ENCODE measurements at regions of chr7 and their contacts with region 1.

Region 1: GRCh38 chr7:106542550-106543220 is 118.3 kb downstream of the CCDC71L start:
- DNase-seq: peak in 1 of 2 donors; percentile 20
- ATAC-seq: peak; percentile 57 to 74 (median 59)
- H3K4me3 ChIP-seq: no peak overlapping the region
- H3K27ac ChIP-seq: no peak overlapping the region
- H3K4me1 ChIP-seq: no peaks in the 10 kb centered on the region
- H3K27me3 ChIP-seq: no peaks in the 10 kb centered on the region
- CTCF ChIP-seq: peak; percentile 55

Region 2: DNA sequence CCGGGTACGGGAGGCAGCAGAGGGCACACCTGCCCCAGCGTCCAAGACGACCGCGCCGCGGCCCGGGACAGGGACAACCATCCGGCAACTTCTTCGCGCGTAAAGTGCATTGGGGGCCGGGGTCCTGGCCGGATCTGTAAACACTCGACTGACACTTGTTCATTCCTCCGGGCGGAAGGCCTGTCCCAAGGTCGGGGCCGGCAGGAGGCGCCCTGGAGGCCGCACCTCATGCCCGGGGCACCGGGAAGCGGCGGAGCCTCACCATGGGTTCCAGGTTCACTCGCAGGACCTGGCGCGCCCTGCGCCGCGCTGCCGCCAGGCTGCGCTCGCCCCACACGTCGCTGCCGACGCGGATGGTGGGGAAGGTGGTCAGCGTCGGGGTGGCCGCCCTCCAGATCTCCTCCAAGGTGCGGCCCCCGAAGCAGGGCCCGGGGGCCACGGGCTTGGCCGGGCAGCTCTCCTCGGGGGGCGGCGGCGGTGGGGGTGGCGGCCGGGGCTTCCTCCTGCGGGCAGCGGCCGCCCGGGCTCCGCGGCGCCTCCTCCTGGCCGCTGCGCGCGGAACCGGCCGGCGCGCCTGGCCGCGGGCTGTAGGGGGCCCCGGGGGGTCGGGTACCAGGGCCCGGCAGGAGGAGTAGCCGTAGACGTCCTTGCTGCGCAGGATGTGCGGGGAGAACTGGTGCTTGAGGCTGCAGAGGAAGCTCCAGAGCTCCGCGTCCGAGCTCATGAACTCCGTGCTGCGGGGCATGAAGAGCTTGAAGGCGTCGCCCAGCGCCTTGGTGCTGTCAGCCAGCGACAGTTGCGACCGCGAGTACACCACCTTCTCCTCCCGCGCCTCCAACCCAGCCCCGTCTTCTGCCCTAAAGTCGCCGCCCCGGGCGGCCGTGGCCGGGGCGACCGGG is 117.5 kb after region 1 on chr7:
- intact Hi-C with region 1: loop called in 1 of 2 experiments (anchors 5 kb)
- DNase-seq: peak; percentile 78 to 88
- ATAC-seq: peak; percentile 67 to 75 (median 72)
- H3K4me3 ChIP-seq: peak overlapping the region; percentile 87
- H3K27ac ChIP-seq: peak overlapping the region; percentile 82
- H3K4me1 ChIP-seq: peaks cover 2% of the 10 kb centered on the region
- H3K27me3 ChIP-seq: no peaks in the 10 kb centered on the region
- CTCF ChIP-seq: peak; percentile 67

Region 3: DNA sequence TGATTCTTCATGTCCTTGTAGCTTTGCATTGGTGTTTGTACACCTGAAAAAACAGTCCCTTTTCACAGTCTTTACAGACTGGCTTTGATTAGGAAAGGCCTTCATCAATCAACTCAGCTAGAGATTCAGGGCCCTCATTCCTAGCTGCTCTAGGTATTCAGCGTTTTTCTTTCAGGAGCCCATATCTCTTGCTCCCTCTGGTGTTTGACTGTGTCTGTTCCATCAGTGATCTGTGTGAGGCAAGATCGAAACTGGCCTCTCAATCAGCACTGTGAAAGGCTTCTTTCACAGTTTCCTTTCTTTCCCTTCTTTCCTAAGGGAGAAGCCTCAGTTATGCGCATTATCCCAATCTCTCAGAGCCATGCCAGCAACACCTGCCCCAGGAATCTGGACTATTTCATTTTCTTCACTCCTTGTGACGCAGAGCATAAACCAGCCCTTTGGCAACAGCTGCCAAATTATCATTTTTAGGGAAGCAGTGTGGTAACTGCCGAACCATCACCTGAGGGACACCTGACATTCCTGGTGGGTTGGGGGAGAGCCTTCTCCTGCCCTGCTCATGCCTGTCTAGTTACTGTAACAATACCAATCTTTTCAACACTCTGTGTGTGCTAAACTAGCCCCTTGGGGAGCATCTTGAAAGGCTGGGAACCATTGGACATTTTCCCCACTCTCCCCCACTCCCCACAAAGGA is 194.0 kb after region 1 on chr7:
- intact Hi-C with region 1: loop called in 1 of 2 experiments (anchors 2 kb)
- DNase-seq: no peak
- ATAC-seq: peak in 3 of 4 donors; percentile 37 to 65 (median 56)
- H3K4me3 ChIP-seq: no peak overlapping the region
- H3K27ac ChIP-seq: no peak overlapping the region
- H3K4me1 ChIP-seq: no peaks in the 10 kb centered on the region
- H3K27me3 ChIP-seq: no peaks in the 10 kb centered on the region
- CTCF ChIP-seq: peak; percentile 49

Measured in psoas muscle (tissue), 8 donors.